Activated CD8-positive, alpha-beta memory T cell treated with anti-CD3 and anti-CD28 coated beads, Interleukin-2, amount 10 ng/mL, durations not matched to agents 7 days and 5 days (primary cell): ENCODE measurements at regions of chr7 and their contacts with region 1.

Region 1: DNA sequence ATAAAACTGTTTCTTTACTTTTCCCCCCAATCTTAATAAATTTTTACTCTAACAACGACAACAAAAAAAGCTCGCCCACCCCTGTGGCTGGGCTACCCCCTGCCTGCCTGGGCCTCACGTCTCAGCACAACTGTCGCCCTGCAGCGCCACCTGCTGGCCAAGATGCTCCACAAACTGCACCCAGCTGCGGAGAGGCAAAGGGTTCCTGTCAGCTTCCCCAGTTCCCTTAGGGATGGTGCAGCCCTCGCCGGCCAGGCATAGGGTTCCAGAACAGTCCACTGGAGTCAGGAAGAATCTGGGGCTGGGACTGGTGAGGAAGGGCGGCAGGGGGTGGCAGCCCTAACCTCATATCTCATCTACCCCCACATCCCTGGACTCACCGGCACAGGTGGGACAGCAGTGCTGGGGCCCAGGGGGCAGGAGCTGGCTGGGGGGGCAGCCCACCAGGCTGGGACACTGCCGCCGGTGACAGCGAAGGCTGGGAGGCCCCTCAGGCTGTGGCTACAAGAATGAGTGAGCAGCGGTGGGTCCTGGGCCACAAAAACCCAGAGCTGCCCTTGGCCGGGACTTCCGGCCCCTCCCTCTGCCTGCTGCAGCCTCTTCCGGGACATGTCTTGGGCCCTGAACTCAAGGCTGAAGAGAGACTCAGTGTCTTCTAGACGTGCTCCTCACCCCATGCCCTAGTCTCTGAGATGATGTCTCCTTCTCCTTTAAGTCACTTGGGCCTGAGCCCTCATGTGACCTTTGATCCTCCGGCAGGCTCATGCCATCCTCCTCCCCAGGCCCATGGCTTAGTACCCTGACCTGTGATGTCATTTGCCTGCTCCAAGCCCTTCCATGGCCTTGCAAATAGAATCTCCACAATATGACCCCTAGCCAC is 21.2 kb downstream of the ATP6V1F start:
- DNase-seq: peak; percentile 91
- ATAC-seq: peak; percentile 81
- H3K4me3 Mint-ChIP-seq: peak overlapping the region; percentile 2
- H3K27ac Mint-ChIP-seq: peak overlapping the region; percentile 80
- H3K4me1 Mint-ChIP-seq: peaks cover 20% of the 10 kb centered on the region
- H3K27me3 Mint-ChIP-seq: peaks cover 5% of the 10 kb centered on the region

Region 2: GRCh38 chr7:127927348-127927696 is 956.5 kb before region 1 on chr7:
- CTCF ChIA-PET with region 1: no interaction called
- DNase-seq: no peak
- ATAC-seq: no peak
- H3K4me3 Mint-ChIP-seq: no peak overlapping the region
- H3K27ac Mint-ChIP-seq: no peak overlapping the region
- H3K4me1 Mint-ChIP-seq: peaks cover 2% of the 10 kb centered on the region
- H3K27me3 Mint-ChIP-seq: no peaks in the 10 kb centered on the region

Region 3: GRCh38 chr7:128739048-128739962 is 144.6 kb before region 1 on chr7 and contains the start of gene CALU:
- CTCF ChIA-PET with region 1: interaction called, 13 read pairs
- DNase-seq: peak; percentile 97
- ATAC-seq: peak; percentile 97
- H3K4me3 Mint-ChIP-seq: peak within 1 kb of the TSS; percentile 95
- H3K27ac Mint-ChIP-seq: peak within 1 kb of the TSS; percentile 95
- H3K4me1 Mint-ChIP-seq: peaks cover 38% of the 10 kb centered on the region
- H3K27me3 Mint-ChIP-seq: no peaks in the 10 kb centered on the region
- total RNA-seq, gene CALU: 28.2 to 39.0 TPM

Region 4: GRCh38 chr7:128833148-128833945 is 50.5 kb before region 1 on chr7:
- CTCF ChIA-PET with region 1: interaction called, 13 read pairs
- DNase-seq: no peak
- ATAC-seq: no peak
- H3K4me3 Mint-ChIP-seq: no peak overlapping the region
- H3K27ac Mint-ChIP-seq: no peak overlapping the region
- H3K4me1 Mint-ChIP-seq: peaks cover 9% of the 10 kb centered on the region
- H3K27me3 Mint-ChIP-seq: peaks cover 37% of the 10 kb centered on the region

Region 5: GRCh38 chr7:128862571-128863432 is 21.1 kb before region 1 on chr7 and contains the start of gene ATP6V1F:
- CTCF ChIA-PET with region 1: interaction called, 107 read pairs
- DNase-seq: peak; percentile 99
- ATAC-seq: peak; percentile 93
- H3K4me3 Mint-ChIP-seq: peak within 1 kb of the TSS; percentile 88
- H3K27ac Mint-ChIP-seq: peak within 1 kb of the TSS; percentile 95
- H3K4me1 Mint-ChIP-seq: peaks cover 15% of the 10 kb centered on the region
- H3K27me3 Mint-ChIP-seq: no peaks in the 10 kb centered on the region
- total RNA-seq, gene ATP6V1F: 127 to 158 TPM

Region 6: GRCh38 chr7:128899392-128899791 is 15.5 kb after region 1 on chr7:
- CTCF ChIA-PET with region 1: interaction called, 12 read pairs
- DNase-seq: no peak
- ATAC-seq: no peak
- H3K4me3 Mint-ChIP-seq: no peak overlapping the region
- H3K27ac Mint-ChIP-seq: no peak overlapping the region
- H3K4me1 Mint-ChIP-seq: peaks cover 3% of the 10 kb centered on the region
- H3K27me3 Mint-ChIP-seq: peaks cover 22% of the 10 kb centered on the region